ENCODE measurements at regions of chr3 and their contacts with region 1.

Region 1: DNA sequence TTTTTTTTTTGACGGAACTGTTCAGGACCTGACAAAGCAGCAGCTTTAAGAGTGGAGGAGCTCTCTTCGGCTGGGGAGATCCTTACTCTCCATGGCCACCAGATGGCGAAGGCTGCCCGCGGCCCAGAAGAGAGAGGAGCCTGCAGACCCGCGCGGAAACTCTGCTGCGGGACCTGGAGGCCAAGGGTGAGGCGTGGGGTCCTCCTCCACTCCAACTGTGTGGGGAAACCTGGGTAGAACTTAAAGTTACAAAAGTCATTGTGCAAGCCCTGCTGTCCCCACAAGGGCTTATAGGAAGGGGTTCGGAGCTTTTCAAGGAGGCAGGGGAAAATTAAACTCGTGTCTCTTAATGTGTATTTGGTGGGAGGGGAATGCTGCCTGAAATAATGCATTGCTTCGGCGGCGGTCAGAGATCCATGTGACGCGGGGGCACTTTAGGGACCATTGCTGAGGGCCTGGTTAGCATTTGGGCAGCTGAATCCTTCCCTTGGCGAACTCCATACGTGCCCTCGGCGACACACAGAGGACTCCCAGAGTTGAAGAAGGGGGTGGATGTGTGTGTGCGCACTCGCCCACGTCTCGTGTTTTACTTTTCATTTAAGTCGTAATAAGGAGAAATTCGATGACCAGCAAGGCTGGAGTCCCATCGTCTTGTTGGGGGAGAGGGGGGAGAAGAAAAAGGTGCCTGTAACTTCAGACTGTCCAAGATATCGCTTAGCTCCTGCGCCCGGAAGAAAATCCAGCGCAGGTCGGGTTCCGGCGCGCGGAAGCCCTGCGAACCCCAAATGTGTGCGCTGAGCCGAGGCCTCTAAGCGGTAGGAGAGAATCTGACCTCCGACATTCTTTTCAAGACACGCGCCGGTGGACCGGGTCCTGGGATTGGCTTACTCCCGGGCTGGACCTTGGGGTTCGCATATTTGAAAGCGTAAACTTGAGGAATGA is 9.7 kb downstream of the EOMES start:
- DNase-seq: peak; percentile 86
- H3K4me3 ChIP-seq: peak overlapping the region; percentile 49
- H3K27ac ChIP-seq: no peak overlapping the region
- H3K4me1 ChIP-seq: no peaks in the 10 kb centered on the region
- H3K27me3 ChIP-seq: peaks cover 72% of the 10 kb centered on the region
- CTCF ChIP-seq: peak; percentile 75

Region 2: DNA sequence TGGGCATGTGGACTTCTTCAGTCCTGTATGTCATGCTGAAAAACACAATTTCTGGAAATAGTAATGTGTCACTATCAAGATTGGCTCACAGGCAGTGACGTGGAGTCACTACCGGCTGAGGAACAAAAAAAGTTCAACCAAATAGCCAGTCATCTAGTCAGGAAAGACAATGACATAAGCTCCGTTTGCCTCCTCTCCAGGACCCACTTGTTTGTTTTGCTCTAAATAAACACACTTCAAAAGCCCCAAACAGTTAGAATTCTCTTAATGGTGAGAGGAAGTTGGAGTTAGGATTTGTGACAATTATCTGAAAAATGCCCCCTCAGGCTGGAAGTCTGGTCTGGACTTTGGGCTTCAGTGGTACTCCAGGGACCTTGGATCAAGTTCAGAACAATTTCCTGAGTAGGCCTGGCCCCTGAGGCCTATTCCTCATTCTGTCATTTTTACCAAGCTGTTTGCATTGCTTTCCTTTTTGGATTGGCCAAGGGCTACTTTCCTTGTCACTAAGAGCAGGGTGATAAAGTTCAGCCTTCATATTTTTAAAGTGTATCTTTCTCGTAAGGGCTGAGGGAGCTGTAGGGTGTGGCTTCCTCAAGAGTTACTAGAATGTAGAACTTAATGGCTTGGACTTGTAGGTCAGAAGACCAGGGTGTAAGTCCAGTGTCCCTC is 89.2 kb before region 1 on chr3:
- CTCF ChIA-PET with region 1: no interaction called
- POLR2A ChIA-PET with region 1: no interaction called
- intact Hi-C with region 1: no loop called
- DNase-seq: no peak
- H3K4me3 ChIP-seq: no peak overlapping the region
- H3K27ac ChIP-seq: no peak overlapping the region
- H3K4me1 ChIP-seq: peaks cover 5% of the 10 kb centered on the region
- H3K27me3 ChIP-seq: no peaks in the 10 kb centered on the region
- CTCF ChIP-seq: no peak

Region 3: GRCh38 chr3:27723815-27724458 is 11.5 kb after region 1 on chr3:
- CTCF ChIA-PET with region 1: interaction called, 10 read pairs
- POLR2A ChIA-PET with region 1: no interaction called
- intact Hi-C with region 1: no loop called
- DNase-seq: no peak
- H3K4me3 ChIP-seq: peak overlapping the region; percentile 47
- H3K27ac ChIP-seq: no peak overlapping the region
- H3K4me1 ChIP-seq: peaks cover 24% of the 10 kb centered on the region
- H3K27me3 ChIP-seq: peaks cover 100% of the 10 kb centered on the region
- CTCF ChIP-seq: no peak

Region 4: DNA sequence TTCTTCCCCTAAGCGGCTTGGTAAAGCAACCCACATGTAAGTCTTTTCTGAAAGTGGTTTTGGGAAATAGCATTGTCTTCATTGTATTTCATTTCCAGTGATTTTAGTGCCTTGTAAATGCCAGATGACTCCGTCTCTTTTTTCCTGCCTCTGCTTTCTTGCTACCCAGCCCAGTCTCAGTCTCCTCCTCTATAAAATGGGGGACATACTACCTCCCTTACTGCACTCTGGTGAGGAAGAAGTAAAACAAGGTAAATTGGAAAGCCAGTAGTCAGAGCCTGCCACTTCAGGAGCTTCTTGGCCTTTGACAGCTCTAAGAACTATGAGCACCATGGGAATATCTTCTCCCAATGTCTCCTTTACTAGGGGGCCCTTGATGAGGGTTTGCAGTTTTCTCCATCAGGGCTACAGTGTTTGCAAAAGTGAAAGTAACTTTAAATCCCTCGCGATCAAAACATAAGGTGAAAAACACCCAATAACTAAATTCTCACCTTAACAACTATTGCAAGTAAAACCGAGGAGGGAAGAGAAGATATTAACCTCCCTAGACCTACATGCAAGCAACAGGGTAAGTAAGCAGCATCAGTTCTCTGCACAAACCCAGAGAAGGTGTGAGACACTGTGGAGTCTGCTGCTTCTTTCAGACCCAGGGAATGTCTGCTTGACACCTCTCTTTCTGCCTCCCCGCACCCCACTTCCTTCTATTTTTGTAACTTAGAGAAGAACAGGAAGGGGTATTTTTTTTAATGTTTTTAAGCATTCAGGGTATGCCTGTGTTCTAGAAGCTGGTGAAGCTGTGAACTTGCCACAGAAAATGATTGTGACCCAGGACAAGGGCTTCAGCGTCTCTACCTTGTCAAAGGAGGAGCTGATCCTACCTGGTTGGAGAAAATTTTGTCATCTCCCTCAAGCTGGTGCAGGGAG is 168.8 kb after region 1 on chr3:
- CTCF ChIA-PET with region 1: interaction called, 11 read pairs
- POLR2A ChIA-PET with region 1: no interaction called
- intact Hi-C with region 1: no loop called
- DNase-seq: no peak
- H3K4me3 ChIP-seq: no peak overlapping the region
- H3K27ac ChIP-seq: no peak overlapping the region
- H3K4me1 ChIP-seq: no peaks in the 10 kb centered on the region
- H3K27me3 ChIP-seq: peaks cover 12% of the 10 kb centered on the region
- CTCF ChIP-seq: no peak

Region 5: GRCh38 chr3:28232659-28233058 is 520.3 kb after region 1 on chr3:
- CTCF ChIA-PET with region 1: no interaction called
- POLR2A ChIA-PET with region 1: no interaction called
- intact Hi-C with region 1: no loop called
- DNase-seq: no peak
- H3K4me3 ChIP-seq: no peak overlapping the region
- H3K27ac ChIP-seq: no peak overlapping the region
- H3K4me1 ChIP-seq: no peaks in the 10 kb centered on the region
- H3K27me3 ChIP-seq: no peaks in the 10 kb centered on the region
- CTCF ChIP-seq: no peak

Region 6: GRCh38 chr3:28286595-28286994 is 574.2 kb after region 1 on chr3:
- CTCF ChIA-PET with region 1: no interaction called
- POLR2A ChIA-PET with region 1: no interaction called
- intact Hi-C with region 1: loop called (anchors 1 kb)
- DNase-seq: peak; percentile 58
- H3K4me3 ChIP-seq: no peak overlapping the region
- H3K27ac ChIP-seq: no peak overlapping the region
- H3K4me1 ChIP-seq: no peaks in the 10 kb centered on the region
- H3K27me3 ChIP-seq: no peaks in the 10 kb centered on the region
- CTCF ChIP-seq: peak; percentile 68

Region 7: DNA sequence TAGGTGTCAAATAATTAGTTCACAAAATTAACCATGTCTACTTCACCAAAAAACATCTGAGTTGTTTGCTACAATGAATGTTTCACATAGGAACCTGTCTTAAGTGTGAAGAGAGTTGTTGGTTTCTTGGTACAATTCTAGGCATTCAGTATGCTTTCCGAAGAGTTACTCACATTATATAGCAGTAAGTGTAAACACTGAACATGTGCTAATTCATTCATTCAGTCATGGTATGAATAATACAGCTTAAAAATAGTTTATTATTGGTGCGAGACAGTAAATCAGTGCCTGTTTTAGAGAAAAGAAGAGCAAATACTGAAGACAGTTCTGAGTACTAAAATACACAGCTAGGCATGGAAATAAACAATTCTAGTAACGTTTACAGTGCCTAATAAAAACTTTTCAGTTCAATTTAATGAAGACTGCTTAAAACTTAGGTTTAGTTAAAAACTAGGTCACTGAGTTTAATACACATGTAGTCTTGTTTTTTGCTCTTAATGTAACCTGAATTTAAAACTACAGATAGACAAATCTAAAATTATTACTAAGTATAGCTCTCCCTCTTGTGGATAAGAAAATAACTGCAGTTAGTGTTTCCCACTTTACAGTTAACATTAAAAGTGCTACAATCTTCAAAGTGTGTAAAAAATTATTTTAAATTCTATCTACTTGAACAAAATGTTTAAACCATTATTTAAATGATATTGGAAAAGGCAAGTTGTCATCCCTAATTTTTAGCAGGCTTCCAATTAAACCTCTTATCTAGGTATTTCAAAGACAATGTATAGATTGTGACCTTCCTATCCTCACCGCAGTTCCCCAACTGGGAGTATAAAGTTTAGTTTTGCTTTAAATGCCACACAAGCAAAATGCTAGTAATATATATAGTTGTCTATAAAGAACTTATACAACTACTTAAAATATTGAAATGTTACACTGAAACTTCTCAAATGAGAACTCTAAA is 616.1 kb after region 1 on chr3:
- CTCF ChIA-PET with region 1: interaction called, 19 read pairs
- POLR2A ChIA-PET with region 1: no interaction called
- intact Hi-C with region 1: no loop called
- DNase-seq: peak; percentile 38
- H3K4me3 ChIP-seq: no peak overlapping the region
- H3K27ac ChIP-seq: no peak overlapping the region
- H3K4me1 ChIP-seq: no peaks in the 10 kb centered on the region
- H3K27me3 ChIP-seq: no peaks in the 10 kb centered on the region
- CTCF ChIP-seq: peak; percentile 78

Region 8: DNA sequence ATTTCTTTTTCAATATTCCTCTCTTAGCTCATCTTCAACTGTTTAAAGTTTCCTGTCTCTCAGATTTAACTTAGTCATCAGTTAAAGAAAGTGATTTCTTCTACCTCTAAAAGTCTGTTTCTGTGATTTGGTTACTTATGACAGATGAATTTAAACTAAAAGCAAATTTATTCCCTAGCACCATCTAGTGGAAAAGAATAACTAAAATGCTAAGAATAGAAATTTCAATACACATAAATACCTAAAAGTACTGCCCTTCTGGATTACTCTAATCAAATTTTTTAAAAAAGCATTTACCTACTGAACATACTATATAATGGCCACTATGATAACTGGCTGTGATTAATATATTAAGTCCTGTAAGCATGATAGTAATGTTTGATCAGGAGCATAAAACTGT is 622.1 kb after region 1 on chr3:
- CTCF ChIA-PET with region 1: interaction called, 19 read pairs
- POLR2A ChIA-PET with region 1: no interaction called
- intact Hi-C with region 1: loop called (anchors 2 kb)
- DNase-seq: no peak
- H3K4me3 ChIP-seq: no peak overlapping the region
- H3K27ac ChIP-seq: no peak overlapping the region
- H3K4me1 ChIP-seq: no peaks in the 10 kb centered on the region
- H3K27me3 ChIP-seq: no peaks in the 10 kb centered on the region
- CTCF ChIP-seq: peak; percentile 39